ENCODE measurements at regions of chrX and their contacts with region 1.

Region 1: GRCh38 chrX:135354288-135354687 is 45.0 kb downstream of the ETDC start:
- DNase-seq: no peak
- H3K4me3 ChIP-seq: no peak overlapping the region
- H3K27ac ChIP-seq: no peak overlapping the region
- H3K4me1 ChIP-seq: no peaks in the 10 kb centered on the region
- H3K27me3 ChIP-seq: no peaks in the 10 kb centered on the region
- CTCF ChIP-seq: no peak

Region 2: GRCh38 chrX:134588781-134589180 is 765.5 kb before region 1 on chrX:
- CTCF ChIA-PET with region 1: no interaction called
- POLR2A ChIA-PET with region 1: no interaction called
- intact Hi-C with region 1: no loop called
- DNase-seq: peak in 1 of 2 experiments; percentile 33
- H3K4me3 ChIP-seq: no peak overlapping the region
- H3K27ac ChIP-seq: no peak overlapping the region
- H3K4me1 ChIP-seq: peaks cover 10% of the 10 kb centered on the region
- H3K27me3 ChIP-seq: no peaks in the 10 kb centered on the region
- CTCF ChIP-seq: no peak

Region 3: GRCh38 chrX:135373357-135373756 is 19.1 kb after region 1 on chrX:
- CTCF ChIA-PET with region 1: no interaction called
- POLR2A ChIA-PET with region 1: no interaction called
- intact Hi-C with region 1: no loop called
- DNase-seq: no peak
- H3K4me3 ChIP-seq: no peak overlapping the region
- H3K27ac ChIP-seq: no peak overlapping the region
- H3K4me1 ChIP-seq: no peaks in the 10 kb centered on the region
- H3K27me3 ChIP-seq: no peaks in the 10 kb centered on the region
- CTCF ChIP-seq: no peak

Region 4: DNA sequence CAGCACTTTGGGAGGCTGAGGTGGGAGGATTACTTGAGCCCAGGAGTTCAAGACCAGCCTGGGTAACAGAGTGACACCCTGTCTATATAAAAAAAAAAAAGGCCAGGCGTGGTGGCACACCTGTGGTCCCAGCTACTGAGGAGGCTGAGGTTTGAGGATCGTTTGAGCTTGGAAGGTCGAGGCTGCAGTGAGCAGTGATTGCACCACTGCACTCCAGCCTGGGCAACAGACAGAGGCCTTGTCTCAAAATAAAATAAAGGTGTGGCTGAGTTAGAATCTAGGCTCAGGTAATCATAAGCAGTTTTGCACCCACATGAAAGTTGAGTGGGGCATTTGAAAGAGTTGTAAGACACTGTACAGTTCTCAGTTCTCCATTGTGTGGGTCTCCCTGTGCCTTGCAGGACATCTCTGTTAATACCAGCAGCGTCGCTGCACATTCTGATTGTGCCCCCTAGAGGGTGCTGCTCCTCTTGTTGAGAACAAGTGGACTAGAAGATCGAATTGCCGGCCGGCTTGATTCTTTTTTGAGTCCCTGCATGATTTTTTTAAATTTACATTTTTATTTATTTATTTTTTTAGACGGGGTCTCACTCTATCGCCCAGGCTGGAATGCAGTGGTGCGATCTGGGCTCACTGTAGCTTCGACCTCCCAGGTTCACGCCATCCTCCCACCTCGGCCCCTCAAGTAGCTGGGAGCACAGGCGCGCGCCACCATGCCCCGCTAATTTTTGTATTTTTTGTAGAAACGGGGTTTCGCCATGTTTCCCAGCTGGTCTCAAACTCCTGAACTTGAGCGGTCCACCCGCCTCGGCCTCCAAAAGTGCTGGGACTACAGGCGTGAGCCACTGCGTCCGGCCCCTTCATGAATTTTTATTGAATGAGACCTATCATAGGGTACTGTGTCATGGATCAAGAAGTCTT is 1599.8 kb after region 1 on chrX:
- CTCF ChIA-PET with region 1: interaction called, 13 read pairs
- POLR2A ChIA-PET with region 1: no interaction called
- intact Hi-C with region 1: no loop called
- DNase-seq: peak; percentile 36 to 59
- H3K4me3 ChIP-seq: no peak overlapping the region
- H3K27ac ChIP-seq: no peak overlapping the region
- H3K4me1 ChIP-seq: no peaks in the 10 kb centered on the region
- H3K27me3 ChIP-seq: no peaks in the 10 kb centered on the region
- CTCF ChIP-seq: peak; percentile 65